PC-3 (cell line): ENCODE measurements at regions of chr15 and their contacts with region 1.

Region 1: GRCh38 chr15:83380682-83381081 is 66.5 kb upstream of the SH3GL3 start:
- DNase-seq: peak; percentile 78
- ATAC-seq: peak; percentile 44
- H3K4me3 ChIP-seq: no peak overlapping the region
- H3K27ac ChIP-seq: peak overlapping the region; percentile 99
- H3K4me1 ChIP-seq: peaks cover 48% of the 10 kb centered on the region
- H3K27me3 ChIP-seq: no peaks in the 10 kb centered on the region
- CTCF ChIP-seq: peak; percentile 63

Region 2: DNA sequence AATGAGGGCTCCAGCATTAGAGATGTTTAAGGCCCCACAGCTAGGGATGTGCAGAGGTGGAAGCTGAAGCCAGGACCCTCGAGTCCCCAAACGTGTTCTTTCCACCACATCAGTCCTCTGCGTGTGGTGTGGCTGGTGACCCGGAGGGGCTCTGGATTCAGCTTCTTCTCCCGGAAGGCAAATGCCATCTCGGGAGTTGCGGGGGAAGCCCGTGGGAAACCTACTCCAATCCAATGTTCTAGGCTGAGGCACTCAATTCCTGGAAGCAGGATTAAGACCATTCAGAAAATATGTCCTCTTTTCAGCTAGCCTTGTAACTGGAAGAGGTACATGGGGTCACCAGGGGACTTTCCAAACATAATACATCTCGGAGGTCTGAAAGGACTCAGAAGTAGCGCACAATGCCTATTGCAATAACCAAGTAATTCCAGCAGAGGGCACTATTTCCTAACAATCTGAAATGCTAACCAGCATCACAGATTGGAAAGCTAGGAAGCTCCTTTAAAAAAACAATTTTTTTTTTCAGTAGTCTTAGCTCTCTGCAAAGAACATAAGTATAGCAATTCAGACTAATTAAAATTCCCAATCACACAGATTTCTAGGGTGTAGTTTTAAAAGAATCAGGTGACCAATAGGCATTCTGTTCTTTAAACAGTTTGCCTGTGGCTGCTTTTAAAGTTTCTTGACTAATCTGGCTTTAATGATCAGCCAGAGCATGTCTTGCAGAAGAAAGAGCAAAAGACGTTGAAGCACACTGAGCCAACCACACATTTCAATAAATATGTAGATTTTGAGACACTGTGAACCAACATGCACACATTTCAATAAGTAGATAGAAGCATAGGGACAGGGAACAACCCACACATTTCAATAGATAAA is 132.3 kb before region 1 on chr15:
- CTCF ChIA-PET with region 1: interaction called, 23 read pairs
- POLR2A ChIA-PET with region 1: interaction called, 3 read pairs
- intact Hi-C with region 1: loop called (anchors 1 kb)
- DNase-seq: peak; percentile 94
- ATAC-seq: peak; percentile 72
- H3K4me3 ChIP-seq: peak overlapping the region; percentile 43; the same call in 1 of the 2 replicates
- H3K27ac ChIP-seq: no peak overlapping the region
- H3K4me1 ChIP-seq: peaks cover 11% of the 10 kb centered on the region
- H3K27me3 ChIP-seq: no peaks in the 10 kb centered on the region
- CTCF ChIP-seq: peak; percentile 90